GM12878 (cell line): ENCODE measurements at regions of chr21 and their contacts with region 1.

Region 1: GRCh38 chr21:44927587-44928461 is 7.1 kb upstream of the ITGB2 start:
- DNase-seq: peak; percentile 87
- ATAC-seq: peak; percentile 72
- H3K4me3 ChIP-seq: peak overlapping the region; percentile 59
- H3K27ac ChIP-seq: peak overlapping the region; percentile 91
- H3K4me1 ChIP-seq: peaks cover 43% of the 10 kb centered on the region
- H3K27me3 ChIP-seq: no peaks in the 10 kb centered on the region
- CTCF ChIP-seq: peak in 1 of 3 experiments; percentile 8; a peak in 1 of 6 replicates
- EP300 ChIP-seq: peak; percentile 73 to 79; a peak in 3 of 4 replicates
- POLR2A ChIP-seq: peak; percentile 51
- RAD21 ChIP-seq: 0 out of 2 replicates have a peak, but pooled peaks have one; percentile 25

Region 2: DNA sequence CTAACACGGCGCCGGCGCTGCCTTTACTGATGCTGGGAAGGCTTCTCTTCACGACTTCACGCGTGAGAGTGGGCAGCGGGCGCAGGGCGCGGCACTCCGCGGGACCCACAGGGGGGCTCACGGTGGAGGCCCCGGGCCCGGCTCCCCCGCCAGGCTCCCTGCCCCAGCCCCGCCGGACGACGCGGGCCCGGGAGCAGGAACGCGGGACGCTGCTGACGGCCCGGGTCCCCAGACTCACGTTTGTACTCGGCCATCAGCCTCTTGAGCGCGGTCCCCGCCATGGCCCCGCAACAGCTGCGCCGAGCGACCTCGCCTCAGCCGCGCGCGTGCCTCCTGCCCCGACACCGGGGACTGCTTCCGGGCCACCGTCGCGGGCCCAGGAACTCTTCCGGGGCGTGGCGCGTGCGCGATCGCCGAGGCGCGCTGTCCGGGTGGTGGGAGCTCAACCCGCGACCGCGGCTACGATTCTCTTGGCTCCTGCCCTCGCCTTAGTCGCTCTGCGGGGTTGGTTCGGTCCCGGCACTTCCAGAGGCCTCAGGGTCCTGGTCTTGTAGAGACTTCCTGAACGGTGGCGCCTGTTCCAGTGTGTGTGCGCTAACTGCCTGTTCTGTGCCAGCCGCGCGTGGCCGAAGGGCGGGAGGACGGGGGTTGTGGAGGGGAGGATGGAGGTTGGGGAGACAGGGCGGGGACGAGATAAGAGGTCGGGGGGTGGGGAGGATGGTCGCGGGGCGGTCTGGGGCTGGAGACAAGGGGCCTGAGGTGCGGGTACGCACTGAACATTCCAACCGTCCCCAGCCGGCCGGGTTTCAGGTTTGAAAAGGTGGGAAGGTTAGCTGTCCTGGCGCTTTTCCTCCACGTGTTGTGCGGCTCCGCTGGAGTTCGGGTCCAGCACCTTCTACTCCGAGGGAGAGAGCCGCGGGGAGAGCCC is 126.1 kb before region 1 on chr21 and contains the start of gene UBE2G2:
- CTCF ChIA-PET with region 1: interaction called, 44 read pairs
- POLR2A ChIA-PET with region 1: interaction called, 6 read pairs
- RAD21 ChIA-PET with region 1: interaction called, 35 read pairs
- SMC1A ChIA-PET with region 1: interaction called, 33 read pairs
- in situ Hi-C with region 1: no loop called
- intact Hi-C with region 1: loop called (anchors 5 kb)
- DNase-seq: no peak
- ATAC-seq: peak; percentile 96
- H3K4me3 ChIP-seq: peak within 1 kb of the TSS; percentile 72
- H3K27ac ChIP-seq: peak within 1 kb of the TSS; percentile 71
- H3K4me1 ChIP-seq: peaks cover 12% of the 10 kb centered on the region
- H3K27me3 ChIP-seq: no peaks in the 10 kb centered on the region
- CTCF ChIP-seq: no peak
- EP300 ChIP-seq: no peak
- POLR2A ChIP-seq: peak; percentile 92
- RAD21 ChIP-seq: no peak
- polyA plus RNA-seq, gene UBE2G2: 27.0 to 32.0 TPM

Region 3: DNA sequence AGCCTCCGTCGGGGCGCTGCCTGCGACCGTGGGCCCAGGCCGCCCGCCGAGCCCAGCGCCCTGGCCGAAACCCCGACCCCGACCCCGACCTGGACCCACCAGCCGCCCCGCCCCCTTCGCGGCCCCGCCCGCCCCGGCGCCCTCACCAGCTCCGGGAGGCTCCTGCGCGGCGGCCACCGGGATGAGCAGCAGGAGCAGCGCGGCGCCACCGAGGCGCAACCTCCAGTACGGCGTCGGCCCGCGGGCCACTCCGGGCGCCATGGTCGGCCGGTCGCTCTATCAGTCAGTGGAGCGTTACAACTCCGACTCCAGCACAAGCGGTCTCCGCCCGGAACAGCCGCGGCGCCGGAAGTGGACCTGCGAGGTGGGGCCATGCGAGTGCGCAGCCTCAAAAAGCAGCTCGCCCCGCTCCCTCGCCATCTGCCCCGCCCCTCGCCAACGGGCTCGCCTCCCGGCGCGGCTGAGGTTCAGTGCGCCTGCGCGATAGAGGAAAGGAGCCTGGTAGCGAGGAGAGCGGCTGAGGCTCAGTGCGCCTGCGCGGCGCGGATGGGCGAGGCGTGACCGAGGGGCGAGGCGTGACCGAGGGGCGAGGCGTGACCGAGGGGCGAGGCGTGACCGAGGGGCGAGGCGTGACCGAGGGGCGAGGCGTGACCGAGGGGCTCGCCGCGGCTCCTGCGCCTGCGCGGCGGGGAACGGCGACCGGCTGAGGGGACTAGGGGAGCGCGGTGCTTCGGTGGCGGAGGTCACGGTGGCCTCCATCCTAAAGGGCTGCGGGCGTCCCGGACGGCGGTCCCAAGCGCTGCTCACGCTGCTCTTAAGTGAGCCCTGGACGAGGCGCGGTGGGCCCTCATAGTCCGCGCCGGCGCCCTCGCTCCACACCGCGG is 54.2 kb before region 1 on chr21 and contains the start of gene PTTG1IP:
- CTCF ChIA-PET with region 1: interaction called, 26 read pairs
- POLR2A ChIA-PET with region 1: interaction called, 59 read pairs
- RAD21 ChIA-PET with region 1: interaction called, 28 read pairs
- SMC1A ChIA-PET with region 1: interaction called, 31 read pairs
- in situ Hi-C with region 1: no loop called
- intact Hi-C with region 1: loop called (anchors 2 kb)
- DNase-seq: peak; percentile 94
- ATAC-seq: peak; percentile 84
- H3K4me3 ChIP-seq: peak within 1 kb of the TSS; percentile 92
- H3K27ac ChIP-seq: peak within 1 kb of the TSS; percentile 67
- H3K4me1 ChIP-seq: peaks cover 17% of the 10 kb centered on the region
- H3K27me3 ChIP-seq: no peaks in the 10 kb centered on the region
- CTCF ChIP-seq: no peak
- EP300 ChIP-seq: no peak
- POLR2A ChIP-seq: peak; percentile 87
- RAD21 ChIP-seq: no peak
- polyA plus RNA-seq, gene PTTG1IP: 2.4 to 10.4 TPM

Region 4: DNA sequence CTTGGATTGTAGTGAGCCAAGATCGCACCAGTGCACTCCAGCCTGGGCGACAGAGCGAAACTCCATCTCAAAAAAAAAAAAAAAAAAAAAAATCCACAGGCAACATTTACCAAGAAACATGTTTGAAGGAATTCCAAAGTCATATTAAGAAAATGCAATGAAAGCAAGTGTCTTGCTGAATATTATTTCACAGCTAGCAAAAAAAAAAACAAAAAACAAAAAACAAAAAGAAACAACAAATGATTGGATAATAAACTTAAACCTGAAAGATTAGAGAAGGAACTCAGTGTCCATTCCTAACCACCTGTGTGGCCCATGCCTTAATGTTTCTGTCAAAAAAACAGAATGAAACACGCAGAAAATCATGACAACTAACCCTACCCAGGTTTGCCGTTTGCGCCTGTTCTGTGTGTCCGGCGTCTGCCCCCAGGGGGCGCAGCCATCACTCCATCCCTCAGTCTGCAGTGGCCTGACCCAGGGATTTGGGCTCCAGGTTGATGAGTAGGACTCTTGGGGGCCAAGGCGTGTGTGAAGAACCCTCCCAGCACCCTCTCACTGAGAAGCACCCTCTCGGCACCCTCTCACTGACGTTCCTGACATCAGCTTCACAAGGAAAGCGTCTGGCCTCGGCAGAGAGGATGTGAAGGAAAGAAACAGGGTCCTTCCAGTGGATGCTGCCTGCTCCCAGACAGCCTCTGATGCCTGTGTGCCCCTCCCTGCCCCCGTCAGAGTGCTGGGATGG is 35.1 kb before region 1 on chr21:
- CTCF ChIA-PET with region 1: interaction called, 80 read pairs
- POLR2A ChIA-PET with region 1: interaction called, 9 read pairs
- RAD21 ChIA-PET with region 1: interaction called, 32 read pairs
- SMC1A ChIA-PET with region 1: interaction called, 56 read pairs
- in situ Hi-C with region 1: loop called (anchors 10 kb)
- intact Hi-C with region 1: loop called (anchors 1 kb)
- DNase-seq: no peak
- ATAC-seq: peak; percentile 96
- H3K4me3 ChIP-seq: no peak overlapping the region
- H3K27ac ChIP-seq: no peak overlapping the region
- H3K4me1 ChIP-seq: no peaks in the 10 kb centered on the region
- H3K27me3 ChIP-seq: no peaks in the 10 kb centered on the region
- CTCF ChIP-seq: peak; percentile 94 to 97 (median 96)
- EP300 ChIP-seq: no peak
- POLR2A ChIP-seq: no peak
- RAD21 ChIP-seq: peak; percentile 76

Region 5: GRCh38 chr21:44914176-44914874 is 13.5 kb before region 1 on chr21:
- CTCF ChIA-PET with region 1: interaction called, 21 read pairs
- POLR2A ChIA-PET with region 1: interaction called, 33 read pairs
- RAD21 ChIA-PET with region 1: interaction called, 15 read pairs
- SMC1A ChIA-PET with region 1: interaction called, 15 read pairs
- in situ Hi-C with region 1: no loop called
- intact Hi-C with region 1: no loop called
- DNase-seq: no peak
- ATAC-seq: peak; percentile 89
- H3K4me3 ChIP-seq: peak overlapping the region; percentile 29; the same call in 1 of the 2 replicates
- H3K27ac ChIP-seq: peak overlapping the region; percentile 45
- H3K4me1 ChIP-seq: peaks cover 36% of the 10 kb centered on the region
- H3K27me3 ChIP-seq: no peaks in the 10 kb centered on the region
- CTCF ChIP-seq: no peak
- EP300 ChIP-seq: no peak
- POLR2A ChIP-seq: no peak
- RAD21 ChIP-seq: no peak

Region 6: DNA sequence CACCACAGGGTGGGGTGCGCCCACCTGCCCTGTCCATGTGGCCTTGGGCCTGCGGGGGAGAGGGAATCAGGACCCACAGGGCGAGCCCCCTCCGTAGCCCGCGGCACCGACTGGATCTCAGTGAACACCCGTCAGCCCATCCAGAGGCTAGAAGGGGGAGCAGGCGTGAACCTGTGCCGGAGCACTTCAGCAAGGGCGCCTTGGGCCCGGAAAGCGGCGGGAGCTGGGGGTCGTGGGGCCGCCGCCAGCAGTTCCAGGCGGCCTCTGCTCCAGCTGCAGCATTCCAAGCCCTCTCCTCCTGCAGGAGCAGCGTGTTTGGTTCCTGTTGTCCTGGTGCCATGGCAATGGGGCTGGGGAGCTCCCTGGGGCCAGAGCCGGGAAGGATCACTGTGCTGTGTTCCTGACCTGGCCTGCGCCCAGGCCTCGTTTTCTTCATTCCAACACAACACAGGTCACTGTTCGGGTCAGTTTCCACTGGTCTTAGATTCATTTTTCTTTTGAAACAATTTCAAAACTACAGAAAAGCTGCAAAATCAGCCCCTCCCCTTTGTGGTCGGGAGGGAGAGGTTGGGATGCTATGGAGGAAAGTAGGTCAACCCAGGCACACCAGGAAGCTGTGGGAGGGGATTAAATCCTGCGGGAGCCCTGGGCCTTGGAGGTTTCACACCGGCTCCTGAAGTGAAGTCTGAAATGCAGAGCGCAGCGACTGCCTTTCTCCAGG is 30.8 kb after region 1 on chr21:
- CTCF ChIA-PET with region 1: no interaction called
- POLR2A ChIA-PET with region 1: no interaction called
- RAD21 ChIA-PET with region 1: no interaction called
- SMC1A ChIA-PET with region 1: no interaction called
- in situ Hi-C with region 1: no loop called
- intact Hi-C with region 1: no loop called
- DNase-seq: no peak
- ATAC-seq: no peak
- H3K4me3 ChIP-seq: no peak overlapping the region
- H3K27ac ChIP-seq: no peak overlapping the region
- H3K4me1 ChIP-seq: no peaks in the 10 kb centered on the region
- H3K27me3 ChIP-seq: no peaks in the 10 kb centered on the region
- CTCF ChIP-seq: no peak
- EP300 ChIP-seq: no peak
- POLR2A ChIP-seq: no peak
- RAD21 ChIP-seq: no peak

Region 7: GRCh38 chr21:45074048-45074817 is 146.4 kb after region 1 on chr21 and contains the start of gene ADARB1:
- CTCF ChIA-PET with region 1: interaction called, 11 read pairs
- POLR2A ChIA-PET with region 1: interaction called, 9 read pairs
- RAD21 ChIA-PET with region 1: no interaction called
- SMC1A ChIA-PET with region 1: no interaction called
- in situ Hi-C with region 1: no loop called
- intact Hi-C with region 1: no loop called
- DNase-seq: no peak
- ATAC-seq: peak; percentile 43
- H3K4me3 ChIP-seq: peak within 1 kb of the TSS; percentile 80; the same call in 1 of the 2 replicates
- H3K27ac ChIP-seq: no peak within 1 kb of the TSS
- H3K4me1 ChIP-seq: 0 out of 2 replicates have a peak, but pooled peaks cover 5% of the 10 kb centered on the region
- H3K27me3 ChIP-seq: peaks cover 0 to 9% of the 10 kb centered on the region in 2 experiments; a peak in 2 of 4 replicates
- CTCF ChIP-seq: no peak
- EP300 ChIP-seq: no peak
- POLR2A ChIP-seq: peak; percentile 76
- RAD21 ChIP-seq: no peak
- polyA plus RNA-seq, gene ADARB1: 5.7 to 9.0 TPM